ENCODE measurements at regions of chr10 and their contacts with region 1.

Region 1: GRCh38 chr10:14195433-14195832 is 135.3 kb downstream of the FRMD4A start:
- DNase-seq: no peak
- ATAC-seq: no peak
- H3K4me3 Mint-ChIP-seq: no peak overlapping the region
- H3K27ac Mint-ChIP-seq: no peak overlapping the region
- H3K4me1 Mint-ChIP-seq: no peaks in the 10 kb centered on the region
- H3K27me3 Mint-ChIP-seq: peaks cover 14% of the 10 kb centered on the region

Region 2: DNA sequence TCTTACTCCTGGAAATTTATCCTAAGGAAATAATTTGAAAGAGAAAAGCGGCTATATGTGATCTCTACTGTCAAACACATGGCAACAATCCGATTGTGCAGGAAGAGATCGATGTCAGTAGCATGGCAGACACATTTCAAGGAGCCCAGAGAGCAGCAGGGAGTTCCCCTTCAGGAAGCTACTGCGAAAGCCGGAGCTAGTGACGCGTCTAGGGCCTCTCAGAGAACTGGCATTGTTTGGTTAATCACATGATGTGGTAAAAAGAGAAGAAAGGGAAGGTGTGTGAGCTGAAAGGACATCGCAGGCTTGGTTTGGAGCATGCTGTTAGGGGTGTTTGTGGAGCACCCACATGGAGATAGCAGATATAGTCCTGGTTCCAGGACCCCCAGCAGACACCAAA is 741.5 kb before region 1 on chr10:
- CTCF ChIA-PET with region 1: no interaction called
- POLR2A ChIA-PET with region 1: no interaction called
- intact Hi-C with region 1: no loop called
- DNase-seq: peak; percentile 68
- ATAC-seq: peak; percentile 97
- H3K4me3 Mint-ChIP-seq: no peak overlapping the region
- H3K27ac Mint-ChIP-seq: no peak overlapping the region
- H3K4me1 Mint-ChIP-seq: peaks cover 7% of the 10 kb centered on the region
- H3K27me3 Mint-ChIP-seq: peaks cover 21% of the 10 kb centered on the region

Region 3: DNA sequence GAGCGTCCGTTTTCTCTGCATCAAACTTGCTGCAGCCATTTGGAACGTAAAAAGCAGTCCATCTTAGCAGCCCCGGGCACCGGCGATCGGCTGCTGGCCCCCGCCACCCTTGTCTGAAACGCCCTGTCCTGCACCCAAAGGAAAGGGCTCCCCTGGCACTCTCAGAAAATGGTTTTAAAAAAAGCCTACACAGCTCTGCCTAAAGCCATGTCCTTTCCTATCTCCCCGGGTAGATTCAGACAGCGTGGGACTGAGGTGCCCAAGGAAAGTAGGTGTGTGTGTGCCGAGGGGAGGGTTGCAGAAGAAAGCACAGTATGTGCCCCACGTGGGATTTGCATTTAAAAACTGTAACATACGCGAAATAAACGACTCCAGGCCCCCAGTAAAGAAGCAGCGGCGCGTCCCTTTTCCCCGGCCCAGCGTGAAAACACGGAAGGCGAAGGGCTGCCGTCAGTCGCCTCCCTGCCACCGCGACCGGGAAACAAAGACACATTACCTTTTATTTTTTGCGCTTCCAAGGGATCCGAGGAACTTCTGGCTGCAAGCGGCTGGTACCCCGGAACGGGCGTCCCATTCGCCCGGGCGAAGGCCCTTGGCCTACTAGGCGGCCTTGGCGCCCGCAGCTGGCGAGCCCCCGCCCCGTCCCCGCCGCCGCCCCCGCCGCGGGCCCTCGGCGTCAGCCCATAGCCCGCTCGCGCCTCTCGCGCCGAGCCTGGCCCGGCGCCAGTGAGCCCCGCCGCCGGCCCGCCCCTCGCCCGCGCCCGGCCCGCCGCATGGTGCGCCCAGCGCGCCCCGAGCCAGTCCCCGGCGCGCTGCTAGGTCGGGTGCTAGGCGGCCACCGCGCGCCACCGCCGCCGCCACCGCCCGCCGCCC is 304.1 kb before region 1 on chr10:
- CTCF ChIA-PET with region 1: no interaction called
- POLR2A ChIA-PET with region 1: no interaction called
- intact Hi-C with region 1: no loop called
- DNase-seq: peak; percentile 41
- ATAC-seq: peak; percentile 55
- H3K4me3 Mint-ChIP-seq: peak overlapping the region; percentile 64
- H3K27ac Mint-ChIP-seq: no peak overlapping the region
- H3K4me1 Mint-ChIP-seq: peaks cover 25% of the 10 kb centered on the region
- H3K27me3 Mint-ChIP-seq: peaks cover 57% of the 10 kb centered on the region

Region 4: DNA sequence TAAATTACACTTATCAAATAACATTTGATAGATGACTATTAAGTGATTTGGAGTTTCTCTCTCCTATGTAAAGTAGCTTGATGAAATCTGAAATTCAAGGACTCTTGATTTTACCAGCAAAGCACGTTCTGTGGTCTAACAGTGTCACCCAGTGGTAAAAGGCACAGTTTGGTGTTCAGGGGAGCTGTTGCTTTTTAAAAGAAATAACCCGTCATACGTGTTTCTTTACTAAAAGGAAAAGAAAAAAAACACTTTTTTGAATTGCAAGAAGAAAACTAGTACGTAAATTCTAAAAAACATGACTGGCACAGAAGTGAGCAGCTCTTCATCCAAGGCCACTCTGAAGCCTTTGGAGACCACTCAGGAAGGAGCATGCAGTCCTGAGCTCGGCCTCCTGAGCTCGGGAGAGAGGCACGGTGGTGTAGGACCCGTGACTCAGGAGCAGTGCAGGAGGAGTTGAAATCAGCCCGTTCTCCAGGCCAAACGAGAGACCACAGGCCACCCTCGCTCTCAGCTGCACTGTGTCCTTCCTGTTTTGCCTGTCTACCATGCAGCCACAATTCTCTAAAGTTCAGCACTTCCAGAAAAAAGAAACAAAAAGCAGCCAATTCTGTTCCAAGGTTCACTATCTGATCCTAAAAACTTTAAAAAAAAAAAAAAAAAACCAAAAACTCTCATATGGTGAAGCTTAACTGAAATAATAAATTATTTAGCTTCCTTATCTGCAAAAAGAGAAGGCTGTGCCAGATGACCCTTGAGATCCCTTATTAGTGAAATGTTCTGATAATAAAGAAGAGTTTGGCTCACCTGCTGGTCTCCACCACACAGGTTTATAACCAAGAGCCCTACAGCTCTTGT is 347.8 kb after region 1 on chr10:
- CTCF ChIA-PET with region 1: interaction called, 18 read pairs
- POLR2A ChIA-PET with region 1: no interaction called
- intact Hi-C with region 1: loop called in 1 of 2 experiments (anchors 5 kb)
- DNase-seq: peak; percentile 60
- ATAC-seq: peak; percentile 81
- H3K4me3 Mint-ChIP-seq: peak overlapping the region; percentile 62
- H3K27ac Mint-ChIP-seq: peak overlapping the region; percentile 90
- H3K4me1 Mint-ChIP-seq: peaks cover 79% of the 10 kb centered on the region
- H3K27me3 Mint-ChIP-seq: no peaks in the 10 kb centered on the region

Region 5: DNA sequence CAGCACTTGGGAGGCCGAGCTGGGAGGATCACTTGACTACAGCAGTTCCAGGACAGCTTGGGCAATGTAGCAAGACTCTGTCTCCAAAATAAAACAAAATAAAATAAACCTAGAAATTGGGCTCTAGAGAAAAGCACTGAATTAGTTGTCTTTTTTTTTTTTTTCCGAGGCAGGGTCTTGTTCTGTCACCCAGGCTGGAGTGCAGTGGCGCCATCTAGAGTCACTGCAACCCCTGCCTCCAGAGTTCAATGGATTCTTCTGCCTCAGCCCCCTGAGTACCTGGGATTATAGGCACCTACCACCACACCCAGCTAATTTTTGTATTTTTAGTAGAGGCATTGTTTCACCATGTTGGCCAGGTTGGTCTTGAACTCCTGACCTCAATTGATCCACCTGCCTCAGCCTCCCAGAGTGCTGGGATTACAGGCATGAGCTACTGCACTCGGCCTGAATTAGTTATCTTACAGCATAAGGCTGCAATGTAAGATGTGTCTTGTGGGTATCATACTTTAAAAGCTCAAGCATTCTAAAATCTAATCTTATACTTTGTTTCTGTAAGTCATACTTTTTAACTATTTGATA is 776.5 kb after region 1 on chr10:
- CTCF ChIA-PET with region 1: no interaction called
- POLR2A ChIA-PET with region 1: no interaction called
- intact Hi-C with region 1: loop called in 1 of 2 experiments (anchors 5 kb)
- DNase-seq: peak; percentile 71
- ATAC-seq: peak; percentile 49
- H3K4me3 Mint-ChIP-seq: no peak overlapping the region
- H3K27ac Mint-ChIP-seq: no peak overlapping the region
- H3K4me1 Mint-ChIP-seq: no peaks in the 10 kb centered on the region
- H3K27me3 Mint-ChIP-seq: peaks cover 16% of the 10 kb centered on the region